Activated CD8-positive, alpha-beta T cell treated with anti-CD3 and anti-CD28 coated beads for 36 hours (primary cell): ENCODE measurements at regions of chr14 and their contacts with region 1.

Region 1: GRCh38 chr14:105917933-105918436 is 391.6 kb downstream of the TMEM121 start:
- DNase-seq: no peak
- ATAC-seq: no peak
- H3K4me3 Mint-ChIP-seq: no peak overlapping the region
- H3K27ac Mint-ChIP-seq: no peak overlapping the region
- H3K4me1 Mint-ChIP-seq: no peaks in the 10 kb centered on the region
- H3K27me3 Mint-ChIP-seq: peaks cover 5% of the 10 kb centered on the region
- CTCF ChIP-seq: no peak

Region 2: DNA sequence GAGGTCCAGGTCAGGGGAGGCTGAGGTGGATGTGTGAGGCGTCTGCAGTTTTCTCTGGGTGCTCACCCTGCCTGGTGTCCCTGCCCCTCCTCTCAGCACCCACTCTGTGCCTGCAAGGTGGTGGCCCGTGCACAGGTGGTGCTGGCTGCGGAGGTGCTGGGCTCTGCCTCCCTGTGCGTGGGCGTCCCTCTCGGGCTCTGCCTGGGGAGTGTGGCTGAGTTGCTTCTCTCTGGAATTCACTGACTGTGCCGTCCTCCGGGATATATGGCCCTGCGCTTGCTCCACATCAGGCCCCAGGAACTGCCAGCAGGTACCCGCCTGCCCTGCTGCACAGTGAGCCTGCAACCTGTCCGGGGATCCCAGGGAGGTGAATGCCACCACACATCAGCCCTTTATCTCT is 12.5 kb before region 1 on chr14:
- CTCF ChIA-PET with region 1: no interaction called
- POLR2A ChIA-PET with region 1: no interaction called
- intact Hi-C with region 1: loop called (anchors 1 kb)
- DNase-seq: no peak
- ATAC-seq: no peak
- H3K4me3 Mint-ChIP-seq: no peak overlapping the region
- H3K27ac Mint-ChIP-seq: no peak overlapping the region
- H3K4me1 Mint-ChIP-seq: peaks cover 3% of the 10 kb centered on the region
- H3K27me3 Mint-ChIP-seq: peaks cover 7% of the 10 kb centered on the region
- CTCF ChIP-seq: no peak

Region 3: GRCh38 chr14:105939810-105940508 is 22.0 kb after region 1 on chr14:
- CTCF ChIA-PET with region 1: no interaction called
- POLR2A ChIA-PET with region 1: no interaction called
- intact Hi-C with region 1: no loop called
- DNase-seq: peak; percentile 22
- ATAC-seq: no peak
- H3K4me3 Mint-ChIP-seq: no peak overlapping the region
- H3K27ac Mint-ChIP-seq: no peak overlapping the region
- H3K4me1 Mint-ChIP-seq: peaks cover 4% of the 10 kb centered on the region
- H3K27me3 Mint-ChIP-seq: peaks cover 4% of the 10 kb centered on the region
- CTCF ChIP-seq: no peak

Region 4: GRCh38 chr14:105989566-105990302 is 71.7 kb after region 1 on chr14:
- CTCF ChIA-PET with region 1: no interaction called
- POLR2A ChIA-PET with region 1: no interaction called
- intact Hi-C with region 1: no loop called
- DNase-seq: peak; percentile 86
- ATAC-seq: peak; percentile 75
- H3K4me3 Mint-ChIP-seq: no peak overlapping the region
- H3K27ac Mint-ChIP-seq: peak overlapping the region; percentile 78
- H3K4me1 Mint-ChIP-seq: peaks cover 76% of the 10 kb centered on the region
- H3K27me3 Mint-ChIP-seq: no peaks in the 10 kb centered on the region
- CTCF ChIP-seq: no peak